Panc1 (cell line): ENCODE measurements at regions of chr16 and their contacts with region 1.

Region 1: DNA sequence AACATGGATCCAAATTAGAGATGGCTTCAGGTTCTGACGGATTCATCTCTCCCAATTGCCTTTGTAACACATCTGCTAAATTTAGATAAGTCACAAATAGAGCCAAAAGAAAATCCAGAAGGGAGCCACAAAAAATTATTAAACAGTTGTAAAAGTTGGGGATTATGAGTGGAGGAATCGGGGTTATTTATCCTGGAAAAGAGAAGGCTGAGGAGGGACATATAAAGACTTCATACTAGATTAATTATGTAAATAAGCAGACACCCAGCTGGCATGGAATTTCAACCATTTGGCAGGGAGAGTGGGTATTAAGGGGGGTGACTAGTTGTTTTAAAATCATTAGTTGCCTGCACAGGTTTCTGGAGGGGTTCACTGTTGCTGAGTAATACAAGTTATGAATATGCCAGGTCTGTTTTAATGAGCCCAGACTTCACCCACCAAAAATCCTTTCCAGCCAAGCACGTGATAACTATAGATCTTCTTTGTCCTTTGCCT is 89.6 kb downstream of the CDH13 start:
- DNase-seq: no peak
- ATAC-seq: no peak
- H3K4me3 ChIP-seq: no peak overlapping the region
- H3K27ac ChIP-seq: no peak overlapping the region
- H3K4me1 ChIP-seq: no peaks in the 10 kb centered on the region
- H3K27me3 ChIP-seq: peaks cover 13% of the 10 kb centered on the region
- CTCF ChIP-seq: no peak

Region 2: DNA sequence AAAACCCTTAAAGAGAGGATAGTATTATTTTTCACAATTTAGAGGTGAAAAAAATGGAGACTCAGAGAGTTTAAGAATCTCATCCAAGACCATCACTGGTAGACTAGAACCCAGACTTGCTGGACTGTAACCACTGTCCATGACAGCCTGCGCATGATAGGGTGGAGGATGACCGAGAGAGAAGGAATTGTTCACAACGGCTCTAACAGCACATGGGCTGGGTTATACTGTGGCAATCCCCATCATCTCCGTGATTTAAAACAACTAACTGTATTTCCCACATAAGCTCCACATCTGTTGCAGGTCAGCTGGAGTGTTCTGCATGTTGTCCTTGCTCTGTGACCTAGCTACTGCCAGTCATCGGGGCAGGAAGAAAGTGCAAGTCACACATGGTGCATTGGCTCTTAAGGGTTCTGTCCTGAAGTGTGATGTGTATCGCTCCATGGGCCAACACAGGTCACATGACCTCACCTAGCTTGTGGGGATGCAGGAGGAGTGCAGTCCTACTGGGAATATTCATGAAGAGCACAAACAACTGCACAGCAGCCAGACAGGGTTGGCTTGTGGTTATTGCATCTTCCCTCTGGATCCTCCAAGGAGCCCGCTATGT is 415.2 kb before region 1 on chr16:
- CTCF ChIA-PET with region 1: no interaction called
- POLR2A ChIA-PET with region 1: interaction called, 13 read pairs
- in situ Hi-C with region 1: no loop called
- intact Hi-C with region 1: no loop called
- DNase-seq: no peak
- ATAC-seq: peak; percentile 38; the same call in 1 of the 2 replicates
- H3K4me3 ChIP-seq: no peak overlapping the region
- H3K27ac ChIP-seq: no peak overlapping the region
- H3K4me1 ChIP-seq: no peaks in the 10 kb centered on the region
- H3K27me3 ChIP-seq: no peaks in the 10 kb centered on the region
- CTCF ChIP-seq: no peak

Region 3: DNA sequence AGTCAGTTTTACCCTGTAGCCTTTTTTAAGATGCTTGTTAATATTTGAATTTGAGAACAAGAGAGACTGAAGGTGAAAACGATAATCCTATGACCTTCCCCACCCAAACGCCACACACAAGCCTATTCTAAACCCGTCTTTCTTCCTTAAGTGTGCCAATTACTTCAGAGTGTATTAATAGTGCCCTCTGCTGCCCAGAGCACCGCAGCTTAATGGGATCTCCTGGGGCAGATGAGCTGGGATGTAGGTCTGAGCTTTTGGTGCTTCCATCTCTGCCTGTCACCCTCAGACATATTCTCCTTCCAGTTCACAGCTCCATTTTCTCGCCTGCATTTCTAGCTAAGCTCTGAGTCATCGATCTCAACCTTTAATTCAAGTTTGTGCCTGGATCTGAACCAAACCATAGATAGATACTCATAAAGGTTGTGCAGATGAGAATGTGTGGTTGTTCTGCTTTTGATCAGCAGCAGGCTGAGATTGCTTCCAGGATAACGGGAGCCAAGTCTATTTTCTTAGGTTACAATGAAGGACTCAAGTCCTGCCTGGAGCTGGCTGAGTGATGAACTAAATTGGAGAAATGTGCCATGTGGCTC is 136.0 kb before region 1 on chr16:
- CTCF ChIA-PET with region 1: no interaction called
- POLR2A ChIA-PET with region 1: no interaction called
- in situ Hi-C with region 1: no loop called
- intact Hi-C with region 1: no loop called
- DNase-seq: no peak
- ATAC-seq: no peak
- H3K4me3 ChIP-seq: no peak overlapping the region
- H3K27ac ChIP-seq: no peak overlapping the region
- H3K4me1 ChIP-seq: no peaks in the 10 kb centered on the region
- H3K27me3 ChIP-seq: no peaks in the 10 kb centered on the region
- CTCF ChIP-seq: peak; percentile 47